Activated CD4-positive, alpha-beta T cell treated with anti-CD3 and anti-CD28 coated beads, Interleukin-2, amount 10 ng/mL, durations not matched to agents 24 days and 14 days (primary cell): ENCODE measurements at regions of chr17 and their contacts with region 1.

Region 1: GRCh38 chr17:74987418-74987908 is at the start of gene CDR2L:
- DNase-seq: peak; percentile 99
- H3K4me3 Mint-ChIP-seq: peak within 1 kb of the TSS; percentile 87
- H3K27ac Mint-ChIP-seq: no peak within 1 kb of the TSS
- H3K4me1 Mint-ChIP-seq: peaks cover 12% of the 10 kb centered on the region
- H3K27me3 Mint-ChIP-seq: peaks cover 47% of the 10 kb centered on the region
- total RNA-seq, gene CDR2L: 1.4 and 1.8 TPM in 2 replicates

Region 2: DNA sequence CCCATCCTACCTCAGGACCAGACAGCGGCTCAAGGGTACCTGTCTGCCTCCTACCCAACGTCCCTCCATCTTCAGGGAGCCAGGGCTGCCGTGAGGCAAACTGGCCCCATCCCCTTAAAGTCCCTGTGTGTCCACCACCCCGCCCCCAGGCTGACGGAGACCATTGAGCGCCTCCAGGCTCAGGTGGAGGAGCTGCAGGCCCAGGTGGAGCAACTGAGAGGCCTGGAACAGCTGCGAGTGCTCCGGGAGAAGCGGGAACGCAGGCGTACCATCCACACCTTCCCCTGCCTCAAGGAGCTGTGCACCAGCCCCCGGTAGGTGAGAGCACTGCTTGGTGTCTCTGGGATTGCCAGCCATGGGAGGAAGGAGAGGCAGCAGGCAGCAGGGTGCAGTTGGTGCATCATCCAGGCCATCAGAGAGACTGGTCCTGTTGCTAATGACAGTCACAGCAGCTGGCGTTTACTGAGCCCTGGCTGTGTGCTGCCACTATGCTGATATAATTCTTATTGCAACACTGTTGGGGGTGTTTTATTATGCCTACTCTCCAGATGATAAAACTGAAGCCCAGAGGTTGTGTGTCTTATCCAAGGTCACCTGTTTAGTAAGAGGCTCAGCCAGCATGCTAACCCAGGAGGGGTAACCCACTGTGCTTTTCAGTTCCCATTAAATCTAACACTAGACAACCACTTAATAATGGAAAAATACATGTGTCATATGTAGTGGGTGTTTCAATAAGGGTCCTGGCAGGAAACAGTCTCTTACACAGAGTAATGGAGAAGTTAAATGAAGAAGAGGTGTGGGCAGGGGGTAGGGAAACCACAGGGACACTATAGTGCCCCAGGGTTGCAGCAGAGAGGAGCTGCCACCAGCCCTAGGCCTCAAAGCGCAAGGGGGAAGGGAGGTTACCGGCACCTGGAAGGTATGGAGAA is 14.7 kb after region 1 on chr17:
- intact Hi-C with region 1: no loop called
- DNase-seq: no peak
- H3K4me3 Mint-ChIP-seq: no peak overlapping the region
- H3K27ac Mint-ChIP-seq: no peak overlapping the region
- H3K4me1 Mint-ChIP-seq: peaks cover 12% of the 10 kb centered on the region
- H3K27me3 Mint-ChIP-seq: peaks cover 2% of the 10 kb centered on the region

Region 3: DNA sequence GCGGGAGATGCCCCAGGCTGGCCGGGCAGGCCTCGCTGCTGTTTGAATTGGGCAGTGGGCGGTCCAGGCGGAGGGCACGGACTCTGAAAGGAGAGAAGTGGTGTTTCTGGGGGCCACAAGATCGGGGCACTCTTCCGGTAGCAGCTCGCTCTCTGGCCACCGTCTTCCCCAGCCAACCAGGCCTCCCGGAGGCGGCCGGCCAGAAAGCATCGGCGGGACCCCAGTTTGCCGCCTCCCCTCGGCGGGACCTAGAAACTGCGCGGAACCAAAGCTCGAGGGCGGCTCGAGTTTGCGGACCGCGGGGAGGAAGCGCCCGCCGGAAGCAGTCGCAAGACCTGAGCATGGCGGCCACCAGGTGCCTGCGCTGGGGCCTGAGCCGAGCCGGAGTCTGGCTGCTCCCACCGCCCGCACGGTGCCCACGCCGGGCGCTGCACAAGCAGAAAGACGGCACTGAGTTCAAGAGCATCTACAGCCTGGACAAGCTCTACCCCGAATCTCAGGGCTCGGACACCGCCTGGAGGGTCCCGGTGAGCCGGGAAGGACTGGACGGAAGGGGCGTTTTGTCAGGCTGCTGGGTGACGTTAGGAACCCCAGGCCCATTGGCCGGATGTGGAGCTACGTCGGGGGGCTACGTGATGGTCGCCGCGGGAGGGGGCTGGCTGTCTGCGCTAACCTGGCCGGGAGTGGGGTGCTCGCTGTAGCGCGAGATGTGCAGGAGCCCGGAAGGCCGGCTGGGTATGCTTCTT is 25.1 kb after region 1 on chr17 and contains the start of gene MRPL58:
- intact Hi-C with region 1: loop called (anchors 1 kb)
- DNase-seq: peak; percentile 95
- H3K4me3 Mint-ChIP-seq: peak within 1 kb of the TSS; percentile 97
- H3K27ac Mint-ChIP-seq: peak within 1 kb of the TSS; percentile 93
- H3K4me1 Mint-ChIP-seq: peaks cover 21% of the 10 kb centered on the region
- H3K27me3 Mint-ChIP-seq: no peaks in the 10 kb centered on the region
- total RNA-seq, gene MRPL58: 73.3 and 74.3 TPM in 2 replicates

Region 4: GRCh38 chr17:75046582-75047289 is 59.3 kb after region 1 on chr17 and contains the starts of genes ATP5PD and KCTD2:
- intact Hi-C with region 1: no loop called
- DNase-seq: peak; percentile 98
- H3K4me3 Mint-ChIP-seq: peak within 1 kb of the TSS; percentile 99
- H3K27ac Mint-ChIP-seq: peak within 1 kb of the TSS; percentile 95
- H3K4me1 Mint-ChIP-seq: peaks cover 29% of the 10 kb centered on the region
- H3K27me3 Mint-ChIP-seq: no peaks in the 10 kb centered on the region
- total RNA-seq, gene ATP5PD: 158 and 161 TPM in 2 replicates
- total RNA-seq, gene KCTD2: 18.7 and 19.0 TPM in 2 replicates